Heart left ventricle (tissue), 16 donors: ENCODE measurements at regions of chr18 and their contacts with region 1.

Region 1: DNA sequence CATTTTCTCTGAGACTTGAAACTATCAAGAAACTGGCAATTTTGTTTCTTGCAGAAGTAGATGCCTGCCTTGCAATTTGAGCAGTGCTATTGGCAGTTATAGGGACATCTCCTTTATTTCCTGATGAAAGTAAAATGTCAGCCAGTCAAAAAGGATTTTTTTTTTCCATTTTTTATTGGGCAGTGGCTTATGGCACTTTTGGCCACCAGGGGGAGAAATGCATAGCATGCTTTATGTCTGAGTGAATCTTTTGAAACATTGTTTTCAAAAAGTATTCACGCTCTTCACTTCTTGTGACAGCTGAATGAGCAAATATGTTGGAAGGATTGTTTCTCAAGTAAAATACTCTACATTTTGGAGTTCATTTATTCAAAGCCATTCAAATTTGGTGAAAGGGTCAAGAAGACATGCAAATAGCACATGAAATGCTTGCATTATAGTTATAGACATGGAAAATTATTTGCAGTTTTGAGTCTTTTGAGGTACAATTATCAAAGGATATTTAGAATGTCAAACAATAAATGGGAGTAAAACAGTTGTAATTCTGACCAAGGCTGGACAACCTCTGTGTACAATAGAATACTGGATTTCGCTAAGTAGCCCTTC is 491.0 kb downstream of the CDH2 start:
- DNase-seq: peak in 1 of 5 donors; percentile 27
- ATAC-seq: no peak
- H3K4me3 ChIP-seq: no peak overlapping the region
- H3K27ac ChIP-seq: no peak overlapping the region
- H3K4me1 ChIP-seq: peaks cover 0 to 7% (median 0%) of the 10 kb centered on the region in 12 donors
- H3K27me3 ChIP-seq: no peaks in the 10 kb centered on the region
- CTCF ChIP-seq: peak; percentile 39 to 68 (median 50)
- POLR2A ChIP-seq: no peak

Region 2: DNA sequence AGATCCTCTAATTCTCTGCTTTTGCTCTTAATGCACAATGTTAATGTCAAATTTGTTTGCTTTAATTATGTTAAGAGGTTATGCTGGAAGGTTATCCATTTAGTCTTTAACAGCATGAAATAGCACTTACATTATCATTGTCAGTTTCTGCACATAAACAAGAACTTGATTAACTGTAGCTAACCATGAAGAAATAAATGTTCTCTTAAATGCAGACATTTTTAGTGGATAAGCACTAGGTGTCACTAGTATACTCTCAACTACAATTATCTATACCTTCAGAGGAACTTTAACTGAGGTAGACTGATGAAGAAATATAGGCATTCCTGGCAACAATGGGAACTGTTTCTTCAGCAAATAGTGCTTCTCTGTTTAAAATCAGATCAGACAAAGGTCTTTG is 322.0 kb before region 1 on chr18:
- intact Hi-C with region 1: loop called in 1 of 10 experiments (anchors 5 kb)
- DNase-seq: no peak
- ATAC-seq: no peak
- H3K4me3 ChIP-seq: no peak overlapping the region
- H3K27ac ChIP-seq: no peak overlapping the region
- H3K4me1 ChIP-seq: no peaks in the 10 kb centered on the region
- H3K27me3 ChIP-seq: no peaks in the 10 kb centered on the region
- CTCF ChIP-seq: peak in 7 of 12 donors; percentile 18 to 43 (median 36)
- POLR2A ChIP-seq: no peak

Region 3: GRCh38 chr18:27447451-27447881 is 238.4 kb before region 1 on chr18:
- intact Hi-C with region 1: no loop called
- DNase-seq: no peak
- ATAC-seq: no peak
- H3K4me3 ChIP-seq: no peak overlapping the region
- H3K27ac ChIP-seq: no peak overlapping the region
- H3K4me1 ChIP-seq: no peaks in the 10 kb centered on the region
- H3K27me3 ChIP-seq: no peaks in the 10 kb centered on the region
- CTCF ChIP-seq: no peak
- POLR2A ChIP-seq: no peak

Region 4: GRCh38 chr18:27666016-27666415 is 19.9 kb before region 1 on chr18:
- intact Hi-C with region 1: loop called in 1 of 10 experiments (anchors 1 kb)
- DNase-seq: no peak
- ATAC-seq: no peak
- H3K4me3 ChIP-seq: no peak overlapping the region
- H3K27ac ChIP-seq: no peak overlapping the region
- H3K4me1 ChIP-seq: peaks cover 0 to 6% (median 0%) of the 10 kb centered on the region in 12 donors
- H3K27me3 ChIP-seq: no peaks in the 10 kb centered on the region
- CTCF ChIP-seq: no peak
- POLR2A ChIP-seq: no peak

Region 5: DNA sequence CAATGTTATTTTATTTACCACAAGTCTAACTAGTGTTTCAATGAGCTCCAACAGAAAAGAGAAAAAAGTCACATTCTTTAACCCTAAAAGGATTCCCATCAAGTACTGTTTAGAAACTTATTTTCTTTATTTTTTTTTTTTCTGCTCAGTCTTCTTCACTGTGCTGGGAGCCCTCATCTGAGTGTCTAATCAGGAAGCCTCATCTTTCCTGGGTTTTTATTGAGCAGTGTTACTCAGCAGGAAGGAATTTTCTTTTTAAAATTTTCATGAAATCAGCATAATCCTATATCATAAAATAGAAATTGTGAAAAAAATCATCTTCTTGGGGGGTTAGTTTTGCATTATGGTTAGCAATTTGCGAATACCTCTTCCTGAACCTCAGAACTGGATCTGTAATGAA is 37.3 kb after region 1 on chr18:
- intact Hi-C with region 1: no loop called
- DNase-seq: no peak
- ATAC-seq: no peak
- H3K4me3 ChIP-seq: no peak overlapping the region
- H3K27ac ChIP-seq: no peak overlapping the region
- H3K4me1 ChIP-seq: no peaks in the 10 kb centered on the region
- H3K27me3 ChIP-seq: no peaks in the 10 kb centered on the region
- CTCF ChIP-seq: no peak
- POLR2A ChIP-seq: no peak